PC-9 (cell line): ENCODE measurements at regions of chr20 and their contacts with region 1.

Region 1: GRCh38 chr20:63980806-63981728 is at the start of gene PRPF6:
- DNase-seq: peak; percentile 90 to 96
- H3K4me3 ChIP-seq: peak within 1 kb of the TSS; percentile 99
- H3K27ac ChIP-seq: peak within 1 kb of the TSS; percentile 62
- H3K4me1 ChIP-seq: peaks cover 17% of the 10 kb centered on the region
- H3K27me3 ChIP-seq: no peaks in the 10 kb centered on the region
- CTCF ChIP-seq: peak; percentile 78
- total RNA-seq, gene PRPF6: 103 and 111 TPM in 2 replicates

Region 2: GRCh38 chr20:63272584-63273579 is 708.2 kb before region 1 on chr20 and contains the start of gene ARFGAP1:
- CTCF ChIA-PET with region 1: no interaction called
- POLR2A ChIA-PET with region 1: interaction called, 23 read pairs
- intact Hi-C with region 1: no loop called
- DNase-seq: peak; percentile 86 to 90
- H3K4me3 ChIP-seq: peak within 1 kb of the TSS; percentile 91
- H3K27ac ChIP-seq: peak within 1 kb of the TSS; percentile 10; the same call in 1 of the 2 replicates
- H3K4me1 ChIP-seq: peaks cover 18% of the 10 kb centered on the region
- H3K27me3 ChIP-seq: no peaks in the 10 kb centered on the region
- CTCF ChIP-seq: no peak
- total RNA-seq, gene ARFGAP1: 89.0 and 101 TPM in 2 replicates

Region 3: DNA sequence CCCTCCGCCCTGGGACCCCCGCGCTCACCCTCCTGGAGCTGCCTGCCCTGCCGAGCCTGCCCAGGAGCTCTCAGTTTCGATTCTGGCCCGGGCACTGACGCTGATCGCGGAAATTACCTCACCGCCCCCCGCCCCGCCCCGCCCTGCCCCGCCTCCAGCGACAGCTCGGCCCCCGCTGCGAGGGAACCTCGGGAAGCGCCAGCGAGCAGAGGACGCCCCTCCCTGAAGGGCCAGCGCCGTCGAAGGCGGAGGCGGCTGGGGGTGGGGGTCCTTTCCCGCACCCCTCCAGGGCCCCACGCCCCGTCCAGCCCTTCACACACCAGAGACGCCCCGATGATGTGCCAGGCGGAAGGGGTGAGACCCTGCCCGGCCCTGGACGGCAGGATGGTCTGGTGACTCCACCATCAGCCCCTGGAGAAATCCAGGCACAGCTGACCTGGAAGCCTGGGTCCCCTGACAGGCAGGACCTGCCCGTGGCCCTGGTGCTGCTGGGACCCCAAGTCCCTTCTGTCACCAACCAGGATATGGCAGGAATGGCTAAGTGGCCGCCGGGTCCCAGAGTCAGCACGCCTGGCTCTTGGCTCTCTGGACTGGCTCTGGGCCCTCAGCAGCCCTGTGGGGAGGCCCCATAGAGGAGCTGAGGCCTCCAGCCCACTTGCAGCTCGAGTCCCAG is 406.8 kb before region 1 on chr20 and contains the start of gene HELZ2:
- CTCF ChIA-PET with region 1: no interaction called
- POLR2A ChIA-PET with region 1: interaction called, 17 read pairs
- intact Hi-C with region 1: no loop called
- DNase-seq: peak in 1 of 2 experiments; percentile 67
- H3K4me3 ChIP-seq: peak within 1 kb of the TSS; percentile 60
- H3K27ac ChIP-seq: no peak within 1 kb of the TSS
- H3K4me1 ChIP-seq: peaks cover 11% of the 10 kb centered on the region
- H3K27me3 ChIP-seq: no peaks in the 10 kb centered on the region
- CTCF ChIP-seq: no peak
- total RNA-seq, gene HELZ2: 33.7 and 52.6 TPM in 2 replicates

Region 4: GRCh38 chr20:63627129-63627750 is 353.8 kb before region 1 on chr20:
- CTCF ChIA-PET with region 1: no interaction called
- POLR2A ChIA-PET with region 1: no interaction called
- intact Hi-C with region 1: loop called (anchors 1 kb)
- DNase-seq: peak; percentile 81 to 97
- H3K4me3 ChIP-seq: peak overlapping the region; percentile 92
- H3K27ac ChIP-seq: no peak overlapping the region
- H3K4me1 ChIP-seq: peaks cover 20% of the 10 kb centered on the region
- H3K27me3 ChIP-seq: no peaks in the 10 kb centered on the region
- CTCF ChIP-seq: no peak

Region 5: GRCh38 chr20:63835021-63835858 is 145.8 kb before region 1 on chr20:
- CTCF ChIA-PET with region 1: no interaction called
- POLR2A ChIA-PET with region 1: interaction called, 36 read pairs
- intact Hi-C with region 1: no loop called
- DNase-seq: peak; percentile 95 to 97
- H3K4me3 ChIP-seq: no peak overlapping the region
- H3K27ac ChIP-seq: no peak overlapping the region
- H3K4me1 ChIP-seq: peaks cover 8% of the 10 kb centered on the region
- H3K27me3 ChIP-seq: no peaks in the 10 kb centered on the region
- CTCF ChIP-seq: no peak